Activated CD4-positive, alpha-beta memory T cell treated with anti-CD3 and anti-CD28 coated beads for 36 hours (primary cell): ENCODE measurements at regions of chr9 and their contacts with region 1.

Region 1: DNA sequence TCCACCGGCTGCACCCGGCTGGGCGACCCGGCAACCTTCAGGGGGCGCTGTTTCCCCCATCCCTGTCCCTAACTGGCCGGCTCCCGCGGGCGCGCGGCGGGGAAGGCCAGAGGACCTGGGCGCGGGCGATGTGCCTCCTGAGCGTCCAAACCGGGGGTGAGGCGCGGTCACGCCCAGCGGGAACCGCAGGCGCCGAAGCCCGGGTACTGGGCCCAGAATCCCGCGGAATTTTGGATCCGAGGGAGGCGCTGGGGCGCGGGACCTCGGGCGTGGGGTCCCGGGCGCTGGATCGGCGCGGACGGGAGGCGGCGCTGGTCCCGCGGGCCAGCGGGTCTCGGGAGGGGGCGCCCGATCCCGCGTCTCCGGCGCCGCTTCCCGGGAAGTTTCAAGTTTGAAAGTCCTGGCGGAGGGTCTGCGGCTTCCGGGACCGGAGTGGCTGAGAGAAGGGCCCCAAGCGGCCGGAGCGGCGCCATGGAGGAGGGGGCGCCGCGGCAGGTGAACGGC is at the start of gene PKN3:
- DNase-seq: peak; percentile 91
- H3K4me3 Mint-ChIP-seq: peak within 1 kb of the TSS; percentile 73
- H3K27ac Mint-ChIP-seq: peak within 1 kb of the TSS; percentile 50
- H3K4me1 Mint-ChIP-seq: peaks cover 12% of the 10 kb centered on the region
- H3K27me3 Mint-ChIP-seq: no peaks in the 10 kb centered on the region
- total RNA-seq, gene PKN3: 10.4 to 11.4 TPM

Region 2: DNA sequence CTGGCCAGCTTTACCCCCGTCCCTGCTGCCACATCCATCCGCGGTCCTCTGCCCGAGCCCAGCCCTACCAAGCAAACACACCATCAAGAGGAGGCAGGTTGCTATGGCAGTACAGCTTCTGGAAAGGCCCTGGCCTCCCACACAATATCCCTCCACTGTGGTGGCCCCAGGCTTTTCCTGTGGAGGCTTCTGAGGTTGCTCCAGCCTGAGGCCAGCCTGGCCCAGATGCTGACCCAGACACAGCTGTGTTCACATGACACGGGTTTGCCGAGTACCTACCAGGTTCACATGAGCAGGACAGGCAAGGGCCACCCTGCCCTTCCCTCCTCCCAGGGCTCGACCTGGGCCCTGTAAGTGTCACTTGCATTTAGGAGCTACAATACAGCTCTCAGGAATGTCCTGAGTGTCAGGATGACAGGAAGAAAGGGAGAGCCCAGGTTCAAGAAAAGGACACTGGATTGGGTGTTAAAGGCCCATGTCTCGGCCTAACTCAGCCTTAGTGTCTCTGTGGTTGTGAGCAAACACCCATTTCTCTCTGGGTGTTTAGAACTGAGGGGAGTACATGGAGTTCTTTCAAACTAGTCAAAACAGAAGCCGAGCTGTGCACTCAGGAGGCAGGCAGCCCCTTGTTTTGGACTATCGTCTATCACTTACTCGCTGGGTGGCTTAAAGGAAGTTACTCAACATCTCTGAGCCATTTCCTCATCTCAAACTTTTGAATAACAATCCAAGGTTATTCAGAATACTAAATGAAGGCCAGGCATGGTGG is 675.5 kb before region 1 on chr9:
- CTCF ChIA-PET with region 1: no interaction called
- POLR2A ChIA-PET with region 1: no interaction called
- intact Hi-C with region 1: no loop called
- DNase-seq: peak; percentile 75
- H3K4me3 Mint-ChIP-seq: peak overlapping the region; percentile 66
- H3K27ac Mint-ChIP-seq: peak overlapping the region; percentile 93
- H3K4me1 Mint-ChIP-seq: peaks cover 89% of the 10 kb centered on the region
- H3K27me3 Mint-ChIP-seq: peaks cover 2% of the 10 kb centered on the region

Region 3: GRCh38 chr9:128656416-128657343 is 45.8 kb before region 1 on chr9 and contains the start of gene DYNC2I2:
- CTCF ChIA-PET with region 1: no interaction called
- POLR2A ChIA-PET with region 1: no interaction called
- intact Hi-C with region 1: loop called (anchors 5 kb)
- DNase-seq: peak; percentile 97
- H3K4me3 Mint-ChIP-seq: peak within 1 kb of the TSS; percentile 83
- H3K27ac Mint-ChIP-seq: peak within 1 kb of the TSS; percentile 99
- H3K4me1 Mint-ChIP-seq: peaks cover 7% of the 10 kb centered on the region
- H3K27me3 Mint-ChIP-seq: no peaks in the 10 kb centered on the region
- total RNA-seq, gene DYNC2I2: 44.9 to 45.2 TPM

Region 4: GRCh38 chr9:128787604-128788041 is 85.1 kb after region 1 on chr9:
- CTCF ChIA-PET with region 1: no interaction called
- POLR2A ChIA-PET with region 1: no interaction called
- intact Hi-C with region 1: no loop called
- DNase-seq: peak; percentile 23
- H3K4me3 Mint-ChIP-seq: peak overlapping the region; percentile 80
- H3K27ac Mint-ChIP-seq: peak overlapping the region; percentile 47
- H3K4me1 Mint-ChIP-seq: peaks cover 15% of the 10 kb centered on the region
- H3K27me3 Mint-ChIP-seq: no peaks in the 10 kb centered on the region

Region 5: DNA sequence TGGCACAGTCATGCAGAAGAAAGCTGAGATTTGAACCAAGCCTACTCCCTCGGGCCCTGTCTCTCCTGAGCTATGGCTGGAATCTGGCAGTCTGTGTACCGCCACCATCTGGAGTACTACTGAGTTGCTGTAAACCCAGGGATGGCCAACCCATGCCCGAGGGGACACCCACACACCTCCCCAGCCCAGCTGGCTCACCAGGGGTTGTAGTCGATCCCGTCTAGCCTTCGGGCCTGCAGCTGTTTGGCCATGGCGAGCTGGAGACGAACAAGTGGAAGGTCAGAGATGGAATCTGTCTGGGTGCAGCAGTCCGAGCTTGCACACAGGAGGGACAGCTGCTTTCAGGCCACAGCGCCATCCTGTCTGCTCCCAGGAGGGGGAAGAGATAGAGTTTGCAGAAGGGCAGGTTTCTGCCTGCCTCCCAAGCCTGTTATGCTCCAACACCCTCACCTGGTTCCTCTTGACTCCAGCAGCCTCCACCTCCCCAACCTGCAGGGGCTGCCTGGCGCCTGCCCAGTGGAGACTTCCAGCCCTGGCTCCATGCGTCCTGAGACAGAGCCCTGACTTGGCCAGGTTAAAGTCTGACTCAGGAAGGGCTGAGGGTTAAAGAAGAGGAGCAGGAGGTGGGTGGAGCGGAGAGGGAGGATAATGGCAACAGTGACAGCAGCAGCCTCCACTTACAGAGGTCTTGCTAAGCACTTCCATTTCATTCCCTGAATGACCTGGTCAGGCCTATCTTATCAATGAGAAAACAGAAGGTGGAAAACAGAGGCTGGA is 142.8 kb after region 1 on chr9:
- CTCF ChIA-PET with region 1: no interaction called
- POLR2A ChIA-PET with region 1: no interaction called
- intact Hi-C with region 1: no loop called
- DNase-seq: no peak
- H3K4me3 Mint-ChIP-seq: no peak overlapping the region
- H3K27ac Mint-ChIP-seq: no peak overlapping the region
- H3K4me1 Mint-ChIP-seq: no peaks in the 10 kb centered on the region
- H3K27me3 Mint-ChIP-seq: no peaks in the 10 kb centered on the region